Activated CD4-positive, alpha-beta memory T cell treated with anti-CD3 and anti-CD28 coated beads for 36 hours (primary cell): ENCODE measurements at regions of chr3 and their contacts with region 1.

Region 1: DNA sequence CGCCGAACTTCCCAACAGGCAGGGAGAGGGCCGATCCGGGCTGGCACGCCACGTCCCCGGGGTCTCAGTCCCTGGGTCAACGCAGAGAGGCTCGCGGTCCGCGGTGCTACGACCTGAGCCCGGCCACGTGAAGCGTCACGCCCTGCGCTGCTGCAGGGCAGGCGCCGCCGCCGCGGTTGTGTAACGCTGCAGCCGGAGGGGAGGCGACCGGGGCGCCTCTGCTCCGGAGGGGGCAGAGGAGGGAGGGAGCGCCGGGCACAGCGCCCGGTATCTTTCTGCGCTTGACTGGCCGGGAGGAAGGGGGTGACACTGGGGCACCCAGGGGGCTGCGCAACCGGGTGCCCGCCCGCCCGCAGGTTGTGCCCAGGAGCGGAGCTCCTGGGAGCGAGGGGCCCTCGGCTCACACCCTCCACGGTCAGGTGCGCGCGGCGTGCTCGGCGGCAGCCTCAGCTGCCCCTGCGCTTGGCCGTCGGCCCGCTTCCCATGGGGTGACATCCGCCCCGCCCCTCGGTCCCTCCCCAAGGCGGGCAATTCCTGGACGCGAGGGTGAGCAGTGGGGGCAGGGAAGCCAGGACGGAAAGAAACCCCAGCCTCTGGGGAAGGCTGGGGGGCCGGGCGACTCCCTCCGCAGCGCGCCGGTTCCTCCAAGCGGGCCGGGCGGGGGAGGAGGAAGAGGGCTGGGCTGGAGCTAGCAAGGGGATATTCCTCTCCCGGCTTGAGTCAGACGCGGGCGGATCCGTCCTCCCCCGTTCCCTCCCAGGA is 852 bp upstream of the BHLHE40 start:
- DNase-seq: peak; percentile 98
- H3K4me3 Mint-ChIP-seq: peak overlapping the region; percentile 87
- H3K27ac Mint-ChIP-seq: peak overlapping the region; percentile 99
- H3K4me1 Mint-ChIP-seq: peaks cover 48% of the 10 kb centered on the region
- H3K27me3 Mint-ChIP-seq: no peaks in the 10 kb centered on the region

Region 2: DNA sequence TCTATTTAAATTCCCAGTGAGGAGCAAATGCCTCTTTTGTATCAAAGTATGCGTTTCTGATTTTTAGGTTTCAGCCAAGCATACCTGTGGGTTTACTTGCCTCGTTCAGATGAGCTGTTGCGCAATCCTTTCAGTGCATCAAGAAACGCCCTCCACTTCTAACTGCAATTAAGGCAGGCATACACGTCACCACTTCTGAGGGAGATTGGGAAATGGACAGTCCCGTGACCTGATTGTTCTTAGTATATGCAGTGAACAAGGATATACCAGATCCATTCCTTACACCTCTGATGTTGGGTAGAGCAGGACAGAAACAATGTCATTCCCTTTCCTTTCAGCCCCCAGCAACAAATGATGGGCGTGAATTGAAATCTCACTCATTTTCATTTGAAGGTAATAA is 266.2 kb before region 1 on chr3:
- CTCF ChIA-PET with region 1: interaction called, 204 read pairs
- POLR2A ChIA-PET with region 1: interaction called, 7 read pairs
- intact Hi-C with region 1: loop called (anchors 1 kb)
- DNase-seq: no peak
- H3K4me3 Mint-ChIP-seq: no peak overlapping the region
- H3K27ac Mint-ChIP-seq: no peak overlapping the region
- H3K4me1 Mint-ChIP-seq: peaks cover 1% of the 10 kb centered on the region
- H3K27me3 Mint-ChIP-seq: no peaks in the 10 kb centered on the region

Region 3: DNA sequence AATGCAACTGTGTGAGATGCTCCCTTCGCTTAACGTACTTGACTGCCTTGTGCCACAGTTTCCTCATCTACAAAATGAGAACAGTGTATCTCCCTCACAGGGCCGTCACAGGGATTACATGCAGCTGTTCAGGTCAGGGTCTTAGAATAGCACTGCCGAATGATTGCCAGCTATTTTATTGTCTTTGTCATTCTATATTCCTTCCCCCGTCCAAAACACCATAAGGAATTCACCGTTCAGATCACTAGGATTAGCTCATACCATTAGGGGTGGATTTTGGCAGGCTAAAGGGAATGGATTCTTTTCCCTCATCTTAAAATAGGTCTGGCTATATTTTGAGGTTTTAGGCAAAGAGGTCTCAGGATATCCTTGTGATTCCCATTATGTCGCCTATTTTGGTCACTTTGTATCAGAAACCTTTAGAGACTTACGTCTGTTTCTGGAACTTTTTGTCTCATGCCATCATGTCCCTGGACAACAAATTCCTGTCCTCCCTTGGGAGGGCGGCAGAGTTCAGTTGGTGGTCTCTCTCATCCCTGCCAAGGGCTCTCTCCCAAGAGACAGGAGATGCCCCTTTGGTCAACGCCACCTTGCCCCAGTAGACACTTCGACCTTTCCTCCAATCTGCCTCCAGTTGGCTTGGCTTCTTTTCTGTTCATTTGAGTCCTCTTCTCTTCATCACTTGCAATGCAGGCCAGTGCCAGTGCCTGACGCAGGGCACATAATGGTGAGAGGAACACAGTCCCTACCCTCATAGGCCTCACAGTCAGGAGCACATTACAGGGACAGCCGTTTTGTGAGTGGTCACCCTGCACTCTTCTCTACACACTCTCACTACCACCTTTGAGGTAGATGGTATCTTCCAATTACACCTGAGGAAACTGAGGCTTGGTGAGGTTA is 170.8 kb before region 1 on chr3:
- CTCF ChIA-PET with region 1: interaction called, 59 read pairs
- POLR2A ChIA-PET with region 1: interaction called, 42 read pairs
- intact Hi-C with region 1: loop called (anchors 1 kb)
- DNase-seq: no peak
- H3K4me3 Mint-ChIP-seq: peak overlapping the region; percentile 45
- H3K27ac Mint-ChIP-seq: peak overlapping the region; percentile 4
- H3K4me1 Mint-ChIP-seq: peaks cover 42% of the 10 kb centered on the region
- H3K27me3 Mint-ChIP-seq: no peaks in the 10 kb centered on the region

Region 4: GRCh38 chr3:4850928-4851265 is 127.5 kb before region 1 on chr3:
- CTCF ChIA-PET with region 1: interaction called, 33 read pairs
- POLR2A ChIA-PET with region 1: interaction called, 75 read pairs
- intact Hi-C with region 1: loop called (anchors 1 kb)
- DNase-seq: peak; percentile 43
- H3K4me3 Mint-ChIP-seq: peak overlapping the region; percentile 53
- H3K27ac Mint-ChIP-seq: peak overlapping the region; percentile 88
- H3K4me1 Mint-ChIP-seq: peaks cover 88% of the 10 kb centered on the region
- H3K27me3 Mint-ChIP-seq: no peaks in the 10 kb centered on the region

Region 5: GRCh38 chr3:4926892-4927291 is 51.5 kb before region 1 on chr3:
- CTCF ChIA-PET with region 1: no interaction called
- POLR2A ChIA-PET with region 1: no interaction called
- intact Hi-C with region 1: loop called (anchors 2 kb)
- DNase-seq: no peak
- H3K4me3 Mint-ChIP-seq: no peak overlapping the region
- H3K27ac Mint-ChIP-seq: no peak overlapping the region
- H3K4me1 Mint-ChIP-seq: peaks cover 15% of the 10 kb centered on the region
- H3K27me3 Mint-ChIP-seq: no peaks in the 10 kb centered on the region

Region 6: DNA sequence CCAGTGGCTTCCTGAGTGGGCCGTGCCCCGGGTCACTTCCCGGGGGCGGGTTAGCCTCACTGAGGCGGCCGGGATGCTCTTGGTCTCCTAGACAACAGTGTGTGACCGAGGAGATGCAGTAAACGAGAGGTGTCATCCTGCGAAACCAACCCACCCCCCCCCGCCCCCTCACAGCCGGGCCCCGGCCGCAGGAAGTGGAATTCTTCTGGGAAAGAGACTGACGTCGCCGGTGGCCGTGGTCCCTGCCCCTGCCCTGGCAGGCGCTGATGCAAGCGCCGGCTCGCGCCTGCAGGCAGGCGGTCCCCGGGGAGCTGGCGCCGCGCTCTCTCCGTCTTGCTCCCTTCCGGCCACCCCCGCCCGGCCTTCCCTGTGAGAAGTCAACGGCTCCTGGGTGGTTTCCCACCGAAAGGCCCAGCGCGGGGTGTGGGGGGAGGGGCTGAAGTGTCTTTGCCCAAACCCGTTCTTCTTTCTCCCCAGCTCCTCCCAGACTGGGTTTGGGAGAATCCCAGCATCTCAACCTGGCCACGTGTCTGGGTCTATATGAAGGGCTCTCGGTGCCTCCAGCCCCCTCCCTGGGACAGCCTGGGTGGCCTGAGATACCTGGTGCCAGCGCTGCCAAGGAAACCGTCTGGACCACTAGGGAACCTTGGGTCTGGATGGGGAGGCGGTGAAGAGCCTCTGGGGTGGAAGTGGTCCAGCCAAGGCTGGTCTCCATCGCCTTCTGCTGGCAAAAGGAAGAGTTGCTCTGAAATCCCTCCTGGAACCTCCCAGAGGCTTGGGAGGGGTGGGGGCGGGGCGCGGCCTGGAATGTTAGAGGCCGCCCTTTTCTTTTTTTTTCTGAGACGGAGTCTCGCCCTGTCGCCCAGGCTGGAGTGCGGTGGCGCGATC is 48.2 kb after region 1 on chr3:
- CTCF ChIA-PET with region 1: interaction called, 181 read pairs
- POLR2A ChIA-PET with region 1: interaction called, 263 read pairs
- intact Hi-C with region 1: loop called (anchors 1 kb)
- DNase-seq: peak; percentile 84
- H3K4me3 Mint-ChIP-seq: peak overlapping the region; percentile 79
- H3K27ac Mint-ChIP-seq: peak overlapping the region; percentile 88
- H3K4me1 Mint-ChIP-seq: peaks cover 51% of the 10 kb centered on the region
- H3K27me3 Mint-ChIP-seq: no peaks in the 10 kb centered on the region

Region 7: DNA sequence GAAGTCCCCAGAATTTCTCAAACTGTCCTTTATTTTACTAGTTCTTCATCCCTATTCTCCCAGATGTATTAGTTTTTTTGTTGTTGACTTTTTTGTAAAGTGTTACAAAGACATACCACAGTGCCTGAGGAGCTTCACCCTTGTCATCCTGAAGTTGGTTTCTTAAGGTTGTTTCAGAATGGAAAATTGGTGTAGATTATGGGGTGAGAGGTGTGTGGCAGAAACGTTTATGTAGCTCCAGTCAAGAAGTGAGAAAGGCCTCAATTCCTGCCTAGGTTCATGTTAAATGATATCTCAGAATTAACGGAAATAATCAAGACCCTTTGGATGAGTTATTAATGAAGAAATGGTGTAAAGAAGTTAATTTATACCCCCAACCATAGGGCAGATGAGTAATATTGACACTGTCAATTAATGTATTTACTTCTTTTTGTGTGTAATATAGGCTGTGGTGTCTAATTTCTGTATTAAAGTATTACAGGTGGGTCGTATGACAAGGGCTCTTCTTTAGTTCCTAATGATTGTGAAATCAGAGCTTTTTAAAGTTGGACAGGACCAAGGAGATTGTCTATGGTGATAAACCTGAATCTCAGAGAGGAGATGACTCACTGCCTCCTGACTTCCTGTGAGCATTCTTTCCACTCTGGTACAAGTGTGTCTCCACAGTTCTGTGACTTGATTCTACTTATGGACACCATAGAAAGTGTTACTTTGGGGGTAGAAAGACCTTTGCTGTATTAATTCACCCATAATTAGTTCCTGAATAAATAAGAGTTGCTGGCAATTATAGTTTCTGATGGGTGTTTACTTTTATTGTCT is 216.2 kb after region 1 on chr3:
- CTCF ChIA-PET with region 1: interaction called, 3 read pairs
- POLR2A ChIA-PET with region 1: interaction called, 22 read pairs
- intact Hi-C with region 1: loop called (anchors 2 kb)
- DNase-seq: peak; percentile 62
- H3K4me3 Mint-ChIP-seq: peak overlapping the region; percentile 66
- H3K27ac Mint-ChIP-seq: peak overlapping the region; percentile 98
- H3K4me1 Mint-ChIP-seq: peaks cover 85% of the 10 kb centered on the region
- H3K27me3 Mint-ChIP-seq: no peaks in the 10 kb centered on the region